Right ventricle myocardium inferior (tissue), 1 donor: ENCODE measurements at regions of chr18 and their contacts with region 1.

Region 1: GRCh38 chr18:2797951-2798350 is 48.9 kb upstream of the EMILIN2 start:
- DNase-seq: no peak
- ATAC-seq: no peak

Region 2: GRCh38 chr18:1976484-1976883 is 821.5 kb before region 1 on chr18:
- intact Hi-C with region 1: no loop called
- DNase-seq: no peak
- ATAC-seq: peak; percentile 37

Region 3: GRCh38 chr18:2823202-2823601 is 25.3 kb after region 1 on chr18:
- intact Hi-C with region 1: loop called (anchors 1 kb)
- DNase-seq: no peak
- ATAC-seq: no peak

Region 4: DNA sequence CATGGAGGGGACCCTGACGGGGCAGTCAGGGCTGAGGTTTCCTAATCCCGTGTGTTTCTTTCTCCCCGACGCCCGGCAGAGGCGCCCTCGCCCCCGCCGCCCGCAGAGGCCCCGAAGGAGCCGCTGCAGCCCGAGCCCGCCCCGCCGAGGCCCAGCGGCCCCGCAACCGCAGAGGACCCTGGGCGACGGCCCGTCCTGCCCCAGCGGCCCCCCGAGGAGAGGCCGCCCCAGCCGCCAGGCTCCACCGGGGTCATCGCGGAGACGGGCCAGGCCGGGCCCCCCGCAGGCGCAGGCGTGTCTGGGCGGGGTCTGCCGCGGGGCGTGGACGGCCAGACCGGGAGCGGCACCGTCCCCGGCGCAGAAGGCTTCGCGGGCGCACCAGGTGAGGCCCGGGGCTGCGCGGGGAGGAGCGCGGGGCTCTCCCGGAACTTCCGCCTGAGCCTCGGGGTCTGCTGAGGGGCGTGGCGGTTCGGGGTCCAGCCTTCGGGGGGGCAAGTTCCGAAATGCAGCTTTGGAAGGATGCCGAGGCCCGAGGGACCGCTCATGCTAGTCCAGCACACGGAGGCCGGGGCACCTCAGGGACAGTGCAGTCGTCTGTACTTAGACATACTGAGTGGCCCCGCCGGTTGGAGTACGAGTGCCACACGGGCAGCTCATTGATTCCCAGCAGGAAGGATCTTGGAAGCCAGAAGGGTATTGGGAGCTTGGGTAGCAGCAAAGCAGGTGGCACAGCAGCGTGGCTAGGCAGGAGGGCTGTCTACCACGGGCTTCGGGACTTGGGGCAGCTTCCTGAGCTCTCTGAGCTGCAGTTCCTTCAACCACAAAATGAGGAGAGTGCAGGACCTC is 109.0 kb after region 1 on chr18:
- intact Hi-C with region 1: loop called (anchors 10 kb)
- DNase-seq: no peak
- ATAC-seq: peak; percentile 24